Activated CD4-positive, alpha-beta memory T cell treated with anti-CD3 and anti-CD28 coated beads for 36 hours (primary cell): ENCODE measurements at regions of chrX and their contacts with region 1.

Region 1: GRCh38 chrX:14029425-14030173 is at the start of gene GEMIN8:
- DNase-seq: peak; percentile 90
- H3K4me3 Mint-ChIP-seq: peak within 1 kb of the TSS; percentile 94
- H3K27ac Mint-ChIP-seq: peak within 1 kb of the TSS; percentile 94
- H3K4me1 Mint-ChIP-seq: peaks cover 25% of the 10 kb centered on the region
- H3K27me3 Mint-ChIP-seq: no peaks in the 10 kb centered on the region
- total RNA-seq, gene GEMIN8: 8.5 to 10.6 TPM

Region 2: DNA sequence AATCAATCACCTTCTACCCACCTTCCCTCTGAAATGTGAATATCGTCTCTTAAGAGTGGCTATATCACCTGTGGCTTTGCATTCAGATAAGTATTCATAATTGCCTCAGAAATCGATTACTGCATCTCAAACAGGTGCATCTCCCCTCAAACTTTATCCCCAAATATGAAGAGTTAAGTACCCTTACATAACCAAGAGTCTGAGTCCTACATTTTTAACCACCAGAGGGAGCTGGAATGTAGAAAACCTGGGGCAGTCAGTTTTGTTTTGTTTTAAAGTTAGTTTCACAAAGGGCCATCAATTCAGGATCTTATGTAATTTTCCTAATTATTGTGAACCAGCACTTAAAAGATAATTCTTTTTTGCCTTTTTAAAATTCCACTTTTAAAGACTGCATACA is 371.0 kb before region 1 on chrX:
- CTCF ChIA-PET with region 1: interaction called, 6 read pairs
- POLR2A ChIA-PET with region 1: no interaction called
- intact Hi-C with region 1: loop called (anchors 1 kb)
- DNase-seq: no peak
- H3K4me3 Mint-ChIP-seq: no peak overlapping the region
- H3K27ac Mint-ChIP-seq: peak overlapping the region; percentile 33
- H3K4me1 Mint-ChIP-seq: peaks cover 28% of the 10 kb centered on the region
- H3K27me3 Mint-ChIP-seq: no peaks in the 10 kb centered on the region

Region 3: DNA sequence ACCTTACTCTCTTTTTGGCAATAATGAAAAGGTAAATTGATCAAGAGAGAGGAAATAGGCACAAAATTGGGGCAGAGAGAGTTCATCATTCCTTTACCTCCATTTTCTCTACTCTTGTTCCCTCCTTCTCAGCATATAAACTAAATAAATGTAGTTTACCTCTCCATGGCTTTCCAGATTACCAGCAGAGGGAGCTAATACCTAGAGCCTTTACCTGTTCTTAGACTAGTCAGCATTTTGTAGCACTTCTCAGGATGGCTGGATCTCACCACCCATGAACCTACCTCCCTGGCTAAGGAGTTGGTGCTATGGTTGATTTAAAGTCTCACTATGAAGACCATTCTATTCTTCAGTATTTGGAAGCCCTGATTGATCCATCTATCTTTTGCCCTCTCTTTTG is 279.4 kb before region 1 on chrX:
- CTCF ChIA-PET with region 1: interaction called, 8 read pairs
- POLR2A ChIA-PET with region 1: no interaction called
- intact Hi-C with region 1: loop called (anchors 1 kb)
- DNase-seq: no peak
- H3K4me3 Mint-ChIP-seq: no peak overlapping the region
- H3K27ac Mint-ChIP-seq: no peak overlapping the region
- H3K4me1 Mint-ChIP-seq: peaks cover 36% of the 10 kb centered on the region
- H3K27me3 Mint-ChIP-seq: no peaks in the 10 kb centered on the region

Region 4: DNA sequence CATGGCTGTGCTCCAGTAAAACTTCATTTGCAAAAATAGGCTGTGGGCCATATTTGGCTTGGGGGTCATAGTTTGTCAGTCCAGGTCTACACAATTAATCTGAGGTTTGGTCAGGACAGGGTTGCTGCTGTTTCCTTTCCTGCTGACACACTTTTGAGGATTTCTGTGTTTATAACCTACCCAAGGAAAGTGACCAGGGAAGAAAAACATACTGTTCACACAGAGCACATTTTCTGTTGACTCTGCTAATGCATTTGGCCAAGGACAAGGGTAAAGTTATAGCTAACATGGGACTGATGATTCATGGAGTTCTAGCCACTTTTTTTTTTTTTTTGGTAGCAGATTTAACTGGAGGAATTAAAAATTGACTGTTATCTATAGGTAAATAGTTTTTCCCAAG is 44.0 kb after region 1 on chrX:
- CTCF ChIA-PET with region 1: no interaction called
- POLR2A ChIA-PET with region 1: no interaction called
- intact Hi-C with region 1: no loop called
- DNase-seq: no peak
- H3K4me3 Mint-ChIP-seq: no peak overlapping the region
- H3K27ac Mint-ChIP-seq: no peak overlapping the region
- H3K4me1 Mint-ChIP-seq: no peaks in the 10 kb centered on the region
- H3K27me3 Mint-ChIP-seq: no peaks in the 10 kb centered on the region

Region 5: DNA sequence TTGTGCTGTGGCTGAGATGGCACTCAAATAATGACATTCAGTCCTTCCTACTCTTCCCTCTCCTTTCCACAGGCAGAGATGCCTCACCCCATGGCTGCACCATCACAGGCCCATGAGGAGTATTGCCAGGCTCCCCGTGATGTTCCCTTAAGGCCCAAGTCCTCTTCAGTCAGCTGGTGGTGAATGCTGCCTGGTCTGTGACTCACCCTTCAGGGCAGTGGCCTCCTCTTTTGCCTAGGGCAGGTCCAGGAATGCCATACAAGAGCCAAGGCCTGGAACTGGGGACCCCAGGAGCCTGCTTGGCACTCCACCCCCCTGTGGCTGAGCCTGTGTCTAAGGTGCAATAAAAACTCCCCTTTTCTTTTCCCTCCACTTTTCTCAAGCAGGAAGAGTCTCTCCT is 144.3 kb after region 1 on chrX:
- CTCF ChIA-PET with region 1: no interaction called
- POLR2A ChIA-PET with region 1: no interaction called
- intact Hi-C with region 1: no loop called
- DNase-seq: no peak
- H3K4me3 Mint-ChIP-seq: no peak overlapping the region
- H3K27ac Mint-ChIP-seq: no peak overlapping the region
- H3K4me1 Mint-ChIP-seq: no peaks in the 10 kb centered on the region
- H3K27me3 Mint-ChIP-seq: peaks cover 1% of the 10 kb centered on the region

Region 6: GRCh38 chrX:14497184-14497666 is 467.6 kb after region 1 on chrX:
- CTCF ChIA-PET with region 1: no interaction called
- POLR2A ChIA-PET with region 1: no interaction called
- intact Hi-C with region 1: loop called (anchors 5 kb)
- DNase-seq: peak; percentile 17
- H3K4me3 Mint-ChIP-seq: peak overlapping the region; percentile 71
- H3K27ac Mint-ChIP-seq: peak overlapping the region; percentile 83
- H3K4me1 Mint-ChIP-seq: peaks cover 18% of the 10 kb centered on the region
- H3K27me3 Mint-ChIP-seq: no peaks in the 10 kb centered on the region

Region 7: GRCh38 chrX:15202454-15203143 is 1173.0 kb after region 1 on chrX:
- CTCF ChIA-PET with region 1: interaction called, 4 read pairs
- POLR2A ChIA-PET with region 1: no interaction called
- intact Hi-C with region 1: loop called (anchors 1 kb)
- DNase-seq: no peak
- H3K4me3 Mint-ChIP-seq: no peak overlapping the region
- H3K27ac Mint-ChIP-seq: no peak overlapping the region
- H3K4me1 Mint-ChIP-seq: peaks cover 47% of the 10 kb centered on the region
- H3K27me3 Mint-ChIP-seq: no peaks in the 10 kb centered on the region